Body of pancreas (tissue), 4 donors: ENCODE measurements at regions of chr1 and their contacts with region 1.

Region 1: DNA sequence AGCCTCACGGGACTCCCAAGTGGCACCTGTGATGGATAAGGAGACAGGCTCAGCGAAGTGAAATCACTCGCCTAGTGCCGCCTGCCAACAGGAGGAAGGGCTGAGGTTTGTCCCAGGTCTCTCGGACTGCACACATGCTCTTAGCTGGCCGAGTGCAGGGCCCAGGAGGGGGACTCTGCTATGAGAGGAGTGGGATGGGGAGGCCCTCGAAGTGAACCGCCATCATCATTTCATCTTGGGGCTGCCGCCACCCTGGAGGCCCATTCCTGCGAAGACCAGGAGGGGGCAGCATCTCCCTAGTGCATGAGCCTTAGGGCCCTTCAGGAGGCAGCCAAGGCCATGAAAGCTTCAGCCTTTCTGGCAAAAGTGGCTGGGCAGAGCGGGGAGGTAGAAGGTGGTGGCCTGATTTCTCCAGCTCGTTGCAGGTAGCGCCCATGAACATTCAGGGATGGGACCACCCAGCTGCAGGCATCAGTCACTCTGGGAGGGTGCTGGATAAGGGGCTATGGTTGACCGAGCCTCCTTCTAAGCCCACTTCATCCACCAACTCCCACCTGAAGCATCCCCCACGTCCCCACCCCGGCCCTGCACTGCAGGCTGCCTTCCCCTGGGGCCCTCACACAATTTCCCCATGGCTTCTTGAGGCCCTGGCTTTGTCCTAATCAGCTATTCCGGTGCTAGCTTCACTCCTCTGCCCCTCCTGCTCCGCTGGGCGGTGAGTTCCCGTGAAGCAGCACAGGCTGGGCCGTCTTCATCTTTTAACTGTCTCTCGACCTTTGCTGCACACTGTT is 17.2 kb upstream of the RASSF5 start:
- DNase-seq: peak; percentile 86 to 90 (median 88)
- ATAC-seq: peak; percentile 96
- H3K4me3 ChIP-seq: no peak overlapping the region
- H3K27ac ChIP-seq: no peak overlapping the region
- H3K4me1 ChIP-seq: peaks cover 13% of the 10 kb centered on the region
- H3K27me3 ChIP-seq: no peaks in the 10 kb centered on the region
- CTCF ChIP-seq: peak; percentile 94 to 99 (median 98)
- POLR2A ChIP-seq: no peak

Region 2: GRCh38 chr1:206544562-206545257 is 54.5 kb after region 1 on chr1:
- intact Hi-C with region 1: loop called (anchors 10 kb)
- DNase-seq: peak; percentile 72 to 81 (median 78)
- ATAC-seq: peak; percentile 52
- H3K4me3 ChIP-seq: no peak overlapping the region
- H3K27ac ChIP-seq: peak overlapping the region in 3 of 4 donors; percentile 0 to 16 (median 10)
- H3K4me1 ChIP-seq: peaks cover 34% of the 10 kb centered on the region
- H3K27me3 ChIP-seq: no peaks in the 10 kb centered on the region
- CTCF ChIP-seq: peak; percentile 67 to 87 (median 80)
- POLR2A ChIP-seq: no peak

Region 3: DNA sequence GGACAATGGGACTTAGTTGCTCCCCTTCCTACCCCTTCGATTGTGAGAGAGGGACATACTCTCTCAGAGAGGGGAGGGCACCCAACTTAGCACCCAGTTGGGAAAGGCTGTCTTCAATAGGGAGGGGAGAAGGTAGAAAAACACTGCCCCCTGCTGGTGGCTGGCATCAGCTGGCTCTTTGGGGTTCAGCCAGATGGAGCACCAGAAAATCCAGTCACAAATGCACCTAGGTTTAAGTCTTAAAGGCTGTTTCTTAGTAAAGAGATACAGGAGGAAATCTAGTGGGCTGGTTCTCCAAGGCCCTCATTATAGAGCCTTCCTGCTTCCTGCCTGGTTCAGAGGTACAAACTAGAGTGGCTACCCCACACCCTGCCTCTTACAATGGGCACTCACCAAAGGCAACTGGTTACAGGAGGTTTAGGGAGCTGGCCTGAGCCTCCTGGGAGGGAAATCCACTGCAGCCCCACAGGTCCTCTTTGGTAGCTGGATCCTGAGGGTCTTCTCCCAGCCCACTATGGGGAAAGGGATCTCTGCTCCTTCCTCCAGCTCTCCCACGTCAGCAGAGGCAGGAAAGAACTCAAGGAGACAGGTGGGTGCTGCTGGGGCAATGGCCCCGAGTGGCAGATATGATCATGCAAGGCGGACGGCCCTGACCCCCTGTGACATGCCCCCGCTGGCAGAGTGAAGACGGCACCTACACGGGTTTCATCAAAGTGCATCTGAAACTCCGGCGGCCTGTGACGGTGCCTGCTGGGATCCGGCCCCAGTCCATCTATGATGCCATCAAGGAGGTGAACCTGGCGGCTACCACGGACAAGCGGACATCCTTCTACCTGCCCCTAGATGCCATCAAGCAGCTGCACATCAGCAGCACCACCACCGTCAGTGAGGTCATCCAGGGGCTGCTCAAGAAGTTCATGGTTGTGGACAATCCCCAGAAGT is 93.8 kb after region 1 on chr1:
- intact Hi-C with region 1: loop called (anchors 2 kb)
- DNase-seq: peak; percentile 78 to 85 (median 81)
- ATAC-seq: peak; percentile 64
- H3K4me3 ChIP-seq: no peak overlapping the region
- H3K27ac ChIP-seq: peak overlapping the region in 1 of 4 donors; percentile 27
- H3K4me1 ChIP-seq: peaks cover 11% of the 10 kb centered on the region
- H3K27me3 ChIP-seq: no peaks in the 10 kb centered on the region
- CTCF ChIP-seq: peak; percentile 80 to 92 (median 89)
- POLR2A ChIP-seq: no peak

Region 4: GRCh38 chr1:206663832-206664652 is 173.9 kb after region 1 on chr1:
- intact Hi-C with region 1: loop called (anchors 10 kb)
- DNase-seq: peak; percentile 69 to 77 (median 73)
- ATAC-seq: peak; percentile 49
- H3K4me3 ChIP-seq: no peak overlapping the region
- H3K27ac ChIP-seq: peak overlapping the region in 1 of 4 donors; percentile 32
- H3K4me1 ChIP-seq: peaks cover 26% of the 10 kb centered on the region
- H3K27me3 ChIP-seq: no peaks in the 10 kb centered on the region
- CTCF ChIP-seq: peak; percentile 72 to 94 (median 83)
- POLR2A ChIP-seq: no peak

Region 5: GRCh38 chr1:206856674-206857464 is 366.7 kb after region 1 on chr1:
- intact Hi-C with region 1: no loop called
- DNase-seq: no peak
- ATAC-seq: no peak
- H3K4me3 ChIP-seq: no peak overlapping the region
- H3K27ac ChIP-seq: no peak overlapping the region
- H3K4me1 ChIP-seq: no peaks in the 10 kb centered on the region
- H3K27me3 ChIP-seq: no peaks in the 10 kb centered on the region
- CTCF ChIP-seq: peak in 1 of 7 experiments; percentile 17
- POLR2A ChIP-seq: no peak

Region 6: DNA sequence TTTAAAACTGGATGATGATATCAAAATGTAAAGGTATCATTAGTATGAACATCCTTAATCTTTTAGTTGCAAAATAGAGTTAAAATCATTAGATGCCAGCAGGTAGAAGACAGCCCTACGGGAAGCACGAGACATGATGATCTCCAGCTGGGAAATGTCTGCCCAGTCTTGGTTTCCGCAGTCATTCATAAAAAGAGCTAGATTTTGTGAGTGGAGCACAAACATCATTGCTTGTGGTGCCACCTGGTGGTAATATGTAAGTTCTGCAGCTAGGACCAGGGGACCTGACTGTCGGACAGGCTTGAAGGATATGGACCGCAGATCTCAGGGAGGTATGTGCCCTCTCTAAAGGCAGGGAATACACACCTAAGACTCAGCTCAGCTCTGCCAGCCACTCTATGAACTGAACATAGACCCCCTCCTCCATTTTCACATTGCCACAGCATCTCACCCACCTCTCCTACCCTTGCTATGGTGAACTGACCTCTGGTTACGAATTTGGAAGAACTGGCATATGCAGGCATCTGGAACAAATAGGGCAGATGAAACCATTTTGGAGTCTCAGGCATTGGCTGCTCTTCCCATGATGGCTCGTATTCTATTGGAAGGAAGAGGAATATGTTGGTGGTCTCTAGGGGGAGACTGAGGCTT is 422.4 kb after region 1 on chr1:
- intact Hi-C with region 1: loop called (anchors 10 kb)
- DNase-seq: peak; percentile 78 to 84 (median 80)
- ATAC-seq: peak; percentile 55
- H3K4me3 ChIP-seq: no peak overlapping the region
- H3K27ac ChIP-seq: no peak overlapping the region
- H3K4me1 ChIP-seq: peaks cover 26% of the 10 kb centered on the region
- H3K27me3 ChIP-seq: no peaks in the 10 kb centered on the region
- CTCF ChIP-seq: peak; percentile 71 to 93 (median 86)
- POLR2A ChIP-seq: no peak